ENCODE measurements at regions of chr4 and their contacts with region 1.

Region 1: DNA sequence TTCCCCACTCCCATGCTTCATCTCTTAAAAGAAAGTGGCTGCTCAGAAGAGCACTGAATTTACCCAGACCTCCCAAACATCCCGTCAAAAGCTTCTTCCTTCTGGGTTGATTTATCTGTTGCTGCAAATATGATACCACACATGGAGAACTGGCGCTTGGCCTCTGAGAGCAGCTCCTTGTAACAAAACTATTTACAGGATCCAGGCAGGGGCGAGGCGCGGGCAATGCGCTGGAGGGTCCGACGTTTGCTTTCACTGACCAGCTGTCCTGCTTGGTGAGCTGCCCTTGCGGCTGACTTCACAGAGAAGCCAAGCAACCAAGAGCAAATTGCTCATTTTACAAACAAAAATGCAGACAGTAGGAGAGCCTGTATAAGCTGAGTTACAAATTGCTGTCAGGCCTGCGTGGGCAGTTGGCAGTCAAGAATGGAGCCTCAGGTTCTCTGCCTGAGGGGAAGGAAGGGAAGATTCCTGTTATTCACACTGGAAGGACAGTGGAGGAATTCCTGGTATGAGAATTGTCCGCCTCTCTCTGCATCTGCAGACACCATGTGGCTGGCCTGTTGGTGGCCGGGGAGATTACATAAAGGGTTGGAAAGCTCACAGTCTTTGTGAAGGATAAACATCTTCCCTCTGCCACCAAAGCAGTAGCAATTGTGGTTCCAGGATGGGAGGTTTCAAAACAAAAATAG is 192.2 kb upstream of the LEF1 start:
- DNase-seq: peak; percentile 68 to 74
- H3K4me3 ChIP-seq: no peak overlapping the region
- H3K4me3 Mint-ChIP-seq: peak overlapping the region; percentile 27
- H3K27ac Mint-ChIP-seq: peak overlapping the region; percentile 83
- H3K4me1 ChIP-seq: peaks cover 15% of the 10 kb centered on the region
- H3K4me1 Mint-ChIP-seq: peaks cover 7% of the 10 kb centered on the region
- H3K27me3 ChIP-seq: no peaks in the 10 kb centered on the region
- H3K27me3 Mint-ChIP-seq: no peaks in the 10 kb centered on the region
- CTCF ChIP-seq: no peak

Region 2: GRCh38 chr4:107989537-107990386 is 371.1 kb before region 1 on chr4 and contains the start of gene HADH:
- CTCF ChIA-PET with region 1: no interaction called
- POLR2A ChIA-PET with region 1: no interaction called
- intact Hi-C with region 1: no loop called
- DNase-seq: peak; percentile 89 to 94
- H3K4me3 ChIP-seq: peak within 1 kb of the TSS; percentile 95
- H3K4me3 Mint-ChIP-seq: peak within 1 kb of the TSS; percentile 90
- H3K27ac Mint-ChIP-seq: peak within 1 kb of the TSS; percentile 79
- H3K4me1 ChIP-seq: no peaks in the 10 kb centered on the region
- H3K4me1 Mint-ChIP-seq: peaks cover 13% of the 10 kb centered on the region
- H3K27me3 ChIP-seq: no peaks in the 10 kb centered on the region
- H3K27me3 Mint-ChIP-seq: no peaks in the 10 kb centered on the region
- CTCF ChIP-seq: no peak
- total RNA-seq, gene HADH: 35.8 and 38.1 TPM in 2 replicates

Region 3: DNA sequence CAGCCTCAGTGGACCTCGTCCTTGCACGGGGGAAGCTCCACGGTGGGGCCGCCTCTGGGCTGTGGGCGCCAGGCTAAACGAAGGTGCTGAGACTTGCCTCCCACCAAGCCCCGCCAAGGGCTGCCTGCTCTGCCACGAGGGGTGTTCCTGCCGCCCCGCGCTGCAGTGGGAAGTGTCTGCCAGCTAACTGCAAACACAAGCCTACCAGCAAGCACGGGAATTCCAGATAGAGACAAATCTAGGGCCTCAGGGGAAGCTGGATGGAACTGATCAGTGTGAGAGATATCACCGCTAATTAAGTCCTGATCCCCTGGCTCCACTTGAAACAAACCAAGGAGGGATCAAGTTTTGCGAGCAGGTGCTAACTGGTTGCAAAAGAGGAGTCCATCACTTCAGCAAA is 10.6 kb before region 1 on chr4:
- CTCF ChIA-PET with region 1: interaction called, 4 read pairs
- POLR2A ChIA-PET with region 1: no interaction called
- intact Hi-C with region 1: loop called (anchors 1 kb)
- DNase-seq: no peak
- H3K4me3 ChIP-seq: no peak overlapping the region
- H3K4me3 Mint-ChIP-seq: no peak overlapping the region
- H3K27ac Mint-ChIP-seq: no peak overlapping the region
- H3K4me1 ChIP-seq: peaks cover 28% of the 10 kb centered on the region
- H3K4me1 Mint-ChIP-seq: peaks cover 20% of the 10 kb centered on the region
- H3K27me3 ChIP-seq: no peaks in the 10 kb centered on the region
- H3K27me3 Mint-ChIP-seq: no peaks in the 10 kb centered on the region
- CTCF ChIP-seq: no peak

Measured in Caco-2 (cell line).